Breast epithelium (tissue), 4 donors: ENCODE measurements at regions of chr1 and their contacts with region 1.

Region 1: GRCh38 chr1:170402476-170403311 is 129.3 kb upstream of the GORAB start:
- DNase-seq: peak in 1 of 2 donors; percentile 19
- H3K4me3 ChIP-seq: no peak overlapping the region
- H3K27ac ChIP-seq: peak overlapping the region; percentile 43 to 65
- H3K4me1 ChIP-seq: no peaks in the 10 kb centered on the region
- H3K27me3 ChIP-seq: no peaks in the 10 kb centered on the region
- CTCF ChIP-seq: no peak
- POLR2A ChIP-seq: no peak

Region 2: DNA sequence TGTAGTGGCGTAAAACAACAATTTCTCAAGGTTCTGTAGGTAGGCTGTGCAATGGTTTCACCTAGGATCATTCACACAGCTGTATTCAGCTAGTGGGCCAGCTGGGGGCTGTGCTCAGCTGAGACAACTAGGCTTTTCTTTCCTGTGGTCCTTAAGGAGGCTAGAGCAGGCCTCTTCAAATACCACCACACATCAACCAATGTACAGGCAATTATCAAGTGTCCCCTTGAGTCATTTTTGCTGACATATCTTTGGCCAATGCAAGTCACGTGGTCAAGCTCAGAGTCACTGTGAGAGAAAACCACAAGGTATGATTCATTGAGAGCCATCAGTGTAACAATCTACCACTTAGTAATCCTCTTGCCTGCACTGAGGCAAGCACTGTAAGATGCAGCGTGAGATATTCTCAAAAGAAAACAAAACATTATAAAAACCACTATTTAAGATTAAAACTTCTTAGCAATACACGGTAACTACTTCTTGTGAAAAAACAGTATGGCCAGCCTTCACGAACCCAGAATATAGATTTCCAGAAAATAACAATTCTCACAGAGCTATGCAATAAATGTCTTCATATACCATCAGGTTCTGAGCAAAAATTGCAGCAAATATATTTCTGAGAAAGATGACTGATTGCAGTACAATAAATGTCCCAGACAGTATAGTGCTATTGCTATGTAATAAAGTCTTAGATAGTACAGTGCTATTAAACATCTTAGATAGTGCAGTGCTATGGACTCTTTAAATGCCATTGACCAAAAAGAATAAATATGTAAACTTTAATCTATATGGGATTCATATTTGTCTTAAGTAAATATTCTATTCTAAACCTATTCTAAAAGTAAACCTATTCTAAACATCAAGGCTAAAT is 1090.4 kb before region 1 on chr1:
- intact Hi-C with region 1: loop called (anchors 10 kb)
- DNase-seq: no peak
- H3K4me3 ChIP-seq: no peak overlapping the region
- H3K27ac ChIP-seq: no peak overlapping the region
- H3K4me1 ChIP-seq: no peaks in the 10 kb centered on the region
- H3K27me3 ChIP-seq: no peaks in the 10 kb centered on the region
- CTCF ChIP-seq: no peak
- POLR2A ChIP-seq: no peak

Region 3: DNA sequence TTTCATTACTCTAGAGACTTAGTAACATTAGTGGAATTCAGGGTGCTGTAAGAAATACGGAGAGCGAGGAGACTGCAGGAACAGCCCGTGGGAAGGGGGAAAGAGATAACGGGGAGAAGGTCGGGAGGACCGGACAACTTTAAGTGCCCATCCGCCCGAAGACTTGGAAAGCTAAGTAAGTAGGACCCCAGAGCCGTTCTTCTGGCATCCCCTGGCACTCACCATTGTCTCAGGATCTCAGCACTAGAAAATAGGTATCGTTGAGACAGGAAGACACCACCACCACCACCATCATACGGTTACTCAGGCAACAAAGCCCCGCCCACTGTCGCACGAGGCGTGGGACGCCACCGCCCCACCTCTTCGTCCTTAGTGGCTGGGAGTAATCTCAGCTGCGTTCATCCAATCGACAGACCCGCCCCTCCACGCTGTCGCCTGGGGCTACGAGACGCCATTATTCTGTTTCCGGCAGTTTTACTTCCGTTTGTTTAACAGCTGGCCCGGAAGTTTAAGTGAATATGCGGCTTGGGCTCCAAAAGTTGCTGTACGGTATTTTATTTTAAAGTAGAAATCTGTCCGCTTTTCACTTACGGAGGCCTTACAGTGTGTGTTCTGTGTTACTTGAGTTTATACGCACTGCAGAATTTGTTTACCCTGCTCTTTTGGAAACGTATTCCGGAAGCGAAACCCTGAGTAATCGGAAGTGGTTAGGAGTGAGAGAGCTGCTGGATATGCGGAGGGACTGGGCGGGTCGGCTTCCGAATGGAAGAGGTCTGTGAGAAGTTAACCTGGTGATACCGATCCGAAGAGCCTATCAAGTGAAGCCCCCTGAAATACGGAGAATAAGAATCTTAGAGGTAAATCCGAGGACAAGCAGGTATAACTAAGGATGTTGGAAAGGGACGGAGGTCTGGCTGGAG is 1034.9 kb before region 1 on chr1 and contains the starts of genes BLZF1 and NME7:
- intact Hi-C with region 1: loop called (anchors 10 kb)
- DNase-seq: peak; percentile 96 to 97
- H3K4me3 ChIP-seq: peak within 1 kb of the TSS; percentile 61 to 71 (median 70)
- H3K27ac ChIP-seq: peak within 1 kb of the TSS; percentile 86 to 88
- H3K4me1 ChIP-seq: peaks cover 0 to 9% of the 10 kb centered on the region in 2 donors
- H3K27me3 ChIP-seq: no peaks in the 10 kb centered on the region
- CTCF ChIP-seq: no peak
- POLR2A ChIP-seq: no peak
- total RNA-seq, gene BLZF1: 22.0 to 34.8 (median 27.7) TPM
- total RNA-seq, gene NME7: 13.0 to 22.8 (median 16.7) TPM

Region 4: GRCh38 chr1:169711469-169712281 is 691.0 kb before region 1 on chr1 and contains the start of gene SELL:
- intact Hi-C with region 1: no loop called
- DNase-seq: peak in 1 of 2 donors; percentile 27
- H3K4me3 ChIP-seq: peak within 1 kb of the TSS in 2 of 3 donors; percentile 34 to 40
- H3K27ac ChIP-seq: no peak within 1 kb of the TSS
- H3K4me1 ChIP-seq: no peaks in the 10 kb centered on the region
- H3K27me3 ChIP-seq: no peaks in the 10 kb centered on the region
- CTCF ChIP-seq: peak; percentile 64 to 80 (median 80)
- POLR2A ChIP-seq: no peak
- total RNA-seq, gene SELL: 1.9 to 2.3 (median 2.0) TPM

Region 5: GRCh38 chr1:170471398-170472053 is 68.8 kb after region 1 on chr1:
- intact Hi-C with region 1: no loop called
- DNase-seq: no peak
- H3K4me3 ChIP-seq: no peak overlapping the region
- H3K27ac ChIP-seq: no peak overlapping the region
- H3K4me1 ChIP-seq: no peaks in the 10 kb centered on the region
- H3K27me3 ChIP-seq: no peaks in the 10 kb centered on the region
- CTCF ChIP-seq: no peak
- POLR2A ChIP-seq: no peak